Mammary epithelial cell (primary cell): ENCODE measurements at regions of chr3 and their contacts with region 1.

Region 1: GRCh38 chr3:157261000-157261399 is 101.1 kb upstream of the CCNL1 start:
- DNase-seq: no peak
- H3K4me3 ChIP-seq: no peak overlapping the region
- H3K27ac ChIP-seq: no peak overlapping the region
- H3K4me1 ChIP-seq: no peaks in the 10 kb centered on the region
- H3K27me3 ChIP-seq: no peaks in the 10 kb centered on the region
- CTCF ChIP-seq: no peak

Region 2: GRCh38 chr3:156211583-156211982 is 1049.4 kb before region 1 on chr3:
- CTCF ChIA-PET with region 1: no interaction called
- dilution Hi-C with region 1: no loop called
- in situ Hi-C with region 1: no loop called
- intact Hi-C with region 1: loop called (anchors 5 kb)
- DNase-seq: peak; percentile 89
- H3K4me3 ChIP-seq: no peak overlapping the region
- H3K27ac ChIP-seq: no peak overlapping the region
- H3K4me1 ChIP-seq: peaks cover 11% of the 10 kb centered on the region
- H3K27me3 ChIP-seq: no peaks in the 10 kb centered on the region
- CTCF ChIP-seq: no peak